Activated CD4-positive, alpha-beta T cell treated with anti-CD3 and anti-CD28 coated beads for 36 hours (primary cell): ENCODE measurements at regions of chr14 and their contacts with region 1.

Region 1: GRCh38 chr14:89954070-89955028 is at the start of gene EFCAB11:
- DNase-seq: peak; percentile 97
- ATAC-seq: peak; percentile 86
- H3K4me3 Mint-ChIP-seq: peak within 1 kb of the TSS; percentile 94
- H3K27ac Mint-ChIP-seq: peak within 1 kb of the TSS; percentile 91
- H3K4me1 Mint-ChIP-seq: peaks cover 32% of the 10 kb centered on the region
- H3K27me3 Mint-ChIP-seq: no peaks in the 10 kb centered on the region
- total RNA-seq, gene EFCAB11: 4.8 to 6.3 TPM

Region 2: GRCh38 chr14:88005978-88006851 is 1948.1 kb before region 1 on chr14:
- CTCF ChIA-PET with region 1: no interaction called
- POLR2A ChIA-PET with region 1: no interaction called
- intact Hi-C with region 1: loop called in 1 of 2 experiments (anchors 5 kb)
- DNase-seq: peak; percentile 83
- ATAC-seq: peak; percentile 89
- H3K4me3 Mint-ChIP-seq: peak overlapping the region; percentile 82
- H3K27ac Mint-ChIP-seq: peak overlapping the region; percentile 92
- H3K4me1 Mint-ChIP-seq: peaks cover 63% of the 10 kb centered on the region
- H3K27me3 Mint-ChIP-seq: no peaks in the 10 kb centered on the region

Region 3: DNA sequence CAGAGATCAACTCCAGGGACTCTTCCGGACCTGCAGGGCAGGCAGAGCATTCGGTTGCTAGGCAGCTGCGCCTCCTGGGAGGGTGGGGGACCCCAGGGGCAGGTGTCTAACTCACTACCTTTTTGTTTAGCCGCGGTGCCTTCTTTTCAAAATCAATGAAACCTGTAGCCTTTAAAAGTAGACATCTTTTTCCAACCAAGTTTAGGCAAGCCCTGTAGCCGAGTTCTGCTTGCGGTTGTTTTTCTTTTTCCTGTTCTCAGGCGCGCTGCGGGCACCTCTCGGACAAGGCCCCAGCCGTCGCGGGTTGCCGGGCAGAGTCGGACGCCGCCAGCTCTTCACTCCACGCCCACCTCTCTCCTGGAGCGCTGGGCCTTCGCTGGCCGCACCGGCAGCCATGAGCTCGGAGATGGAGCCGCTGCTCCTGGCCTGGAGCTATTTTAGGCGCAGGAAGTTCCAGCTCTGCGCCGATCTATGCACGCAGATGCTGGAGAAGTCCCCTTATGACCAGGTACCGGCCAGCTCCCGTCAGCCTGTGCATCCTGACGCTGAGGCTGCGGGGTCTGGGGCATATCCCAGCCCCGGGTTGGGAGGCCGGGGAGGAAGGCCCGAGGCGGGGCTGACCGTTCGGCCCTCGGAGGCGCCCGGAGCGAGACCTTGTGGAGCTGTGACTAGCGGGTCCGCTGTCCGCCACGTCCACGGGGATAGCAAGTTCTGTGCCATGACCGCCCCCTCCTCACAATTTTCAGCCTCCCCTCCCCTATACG is 1129.9 kb before region 1 on chr14 and contains the start of gene TTC8:
- CTCF ChIA-PET with region 1: no interaction called
- POLR2A ChIA-PET with region 1: interaction called, 4 read pairs
- intact Hi-C with region 1: loop called in 1 of 2 experiments (anchors 1 kb)
- DNase-seq: peak; percentile 90
- ATAC-seq: peak; percentile 97
- H3K4me3 Mint-ChIP-seq: peak within 1 kb of the TSS; percentile 81
- H3K27ac Mint-ChIP-seq: peak within 1 kb of the TSS; percentile 94
- H3K4me1 Mint-ChIP-seq: peaks cover 8% of the 10 kb centered on the region
- H3K27me3 Mint-ChIP-seq: peaks cover 3% of the 10 kb centered on the region
- total RNA-seq, gene TTC8: 2.9 to 4.4 TPM

Region 4: DNA sequence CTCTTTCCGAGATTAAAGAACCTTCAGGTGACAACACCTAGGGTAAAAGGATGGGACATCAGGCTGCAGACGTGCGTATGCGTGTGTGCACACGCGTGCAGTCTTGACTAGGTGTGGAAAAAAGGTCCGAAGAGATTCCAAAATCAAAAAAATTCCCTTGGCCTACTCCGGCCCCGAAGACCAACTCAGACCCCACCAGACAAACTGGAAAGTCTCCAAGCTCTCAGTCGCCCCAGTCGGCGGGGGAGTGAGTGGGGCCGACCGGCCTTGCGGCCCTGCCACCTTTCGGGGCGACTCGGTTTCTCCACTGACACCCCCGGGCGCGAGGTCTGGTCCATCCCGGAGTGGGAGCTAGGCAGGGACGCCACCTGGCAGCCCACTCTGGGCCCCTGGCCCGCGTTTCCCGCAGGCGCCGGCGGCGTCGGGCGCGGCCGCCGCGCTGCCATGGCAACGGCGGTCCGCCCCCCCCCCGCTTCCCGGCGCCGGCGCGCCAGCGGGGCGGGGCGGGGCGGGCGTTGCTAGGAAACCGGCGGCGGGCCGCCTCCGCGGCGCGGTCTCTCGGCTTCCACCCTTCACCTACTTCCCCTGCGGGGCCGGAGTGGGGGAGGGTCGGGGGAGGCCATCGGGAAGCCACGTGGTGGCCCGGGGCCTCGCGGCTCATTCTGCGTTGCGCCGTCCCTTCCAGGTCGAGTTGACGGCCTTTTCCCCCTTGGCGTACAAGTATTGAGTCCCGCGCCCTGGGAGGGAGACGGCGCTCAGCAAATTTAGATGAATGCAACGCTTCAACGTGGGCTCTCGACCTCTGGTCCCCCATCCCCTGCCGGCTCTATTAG is 252.9 kb before region 1 on chr14:
- CTCF ChIA-PET with region 1: no interaction called
- POLR2A ChIA-PET with region 1: no interaction called
- intact Hi-C with region 1: loop called in 1 of 2 experiments (anchors 1 kb)
- DNase-seq: peak; percentile 92
- ATAC-seq: peak; percentile 81
- H3K4me3 Mint-ChIP-seq: peak overlapping the region; percentile 65
- H3K27ac Mint-ChIP-seq: peak overlapping the region; percentile 83
- H3K4me1 Mint-ChIP-seq: peaks cover 49% of the 10 kb centered on the region
- H3K27me3 Mint-ChIP-seq: no peaks in the 10 kb centered on the region

Region 5: GRCh38 chr14:89973234-89973823 is 19.0 kb after region 1 on chr14:
- CTCF ChIA-PET with region 1: interaction called, 53 read pairs
- POLR2A ChIA-PET with region 1: no interaction called
- intact Hi-C with region 1: no loop called
- DNase-seq: peak; percentile 70
- ATAC-seq: peak; percentile 63
- H3K4me3 Mint-ChIP-seq: no peak overlapping the region
- H3K27ac Mint-ChIP-seq: no peak overlapping the region
- H3K4me1 Mint-ChIP-seq: no peaks in the 10 kb centered on the region
- H3K27me3 Mint-ChIP-seq: no peaks in the 10 kb centered on the region

Region 6: GRCh38 chr14:90331497-90332435 is 377.4 kb after region 1 on chr14 and contains the start of gene NRDE2:
- CTCF ChIA-PET with region 1: no interaction called
- POLR2A ChIA-PET with region 1: no interaction called
- intact Hi-C with region 1: loop called in 1 of 2 experiments (anchors 1 kb)
- DNase-seq: peak; percentile 99
- ATAC-seq: peak; percentile 99
- H3K4me3 Mint-ChIP-seq: peak within 1 kb of the TSS; percentile 89
- H3K27ac Mint-ChIP-seq: peak within 1 kb of the TSS; percentile 93
- H3K4me1 Mint-ChIP-seq: peaks cover 23% of the 10 kb centered on the region
- H3K27me3 Mint-ChIP-seq: peaks cover 2% of the 10 kb centered on the region
- total RNA-seq, gene NRDE2: 22.8 to 25.3 TPM

Region 7: GRCh38 chr14:90758028-90758889 is 803.9 kb after region 1 on chr14:
- CTCF ChIA-PET with region 1: no interaction called
- POLR2A ChIA-PET with region 1: no interaction called
- intact Hi-C with region 1: loop called in 1 of 2 experiments (anchors 1 kb)
- DNase-seq: peak; percentile 97
- ATAC-seq: peak; percentile 93
- H3K4me3 Mint-ChIP-seq: peak overlapping the region; percentile 74
- H3K27ac Mint-ChIP-seq: peak overlapping the region; percentile 79
- H3K4me1 Mint-ChIP-seq: peaks cover 32% of the 10 kb centered on the region
- H3K27me3 Mint-ChIP-seq: peaks cover 2% of the 10 kb centered on the region